ENCODE measurements at regions of chr5 and their contacts with region 1.

Region 1: DNA sequence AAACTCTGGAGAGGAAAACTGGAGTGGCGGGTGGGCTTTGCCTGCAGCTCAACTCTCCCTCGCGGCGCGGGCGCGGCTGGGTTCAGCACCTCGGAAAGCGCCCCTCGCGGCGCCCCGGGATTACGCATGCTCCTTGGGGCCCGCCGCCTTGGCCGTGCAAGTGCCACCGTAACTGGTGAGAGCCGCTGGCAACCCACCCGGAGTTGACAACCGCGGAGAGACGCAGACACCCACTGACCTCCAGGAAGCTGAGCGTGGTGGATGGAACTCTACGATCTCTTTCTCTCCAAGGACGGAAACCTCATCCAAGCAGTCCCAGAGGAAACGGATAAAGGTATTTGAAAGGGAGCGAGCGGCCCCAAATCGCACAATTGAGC is 194 bp upstream of the RXFP3 start:
- DNase-seq: no peak
- H3K4me3 ChIP-seq: peak overlapping the region; percentile 59
- CTCF ChIP-seq: no peak

Region 2: DNA sequence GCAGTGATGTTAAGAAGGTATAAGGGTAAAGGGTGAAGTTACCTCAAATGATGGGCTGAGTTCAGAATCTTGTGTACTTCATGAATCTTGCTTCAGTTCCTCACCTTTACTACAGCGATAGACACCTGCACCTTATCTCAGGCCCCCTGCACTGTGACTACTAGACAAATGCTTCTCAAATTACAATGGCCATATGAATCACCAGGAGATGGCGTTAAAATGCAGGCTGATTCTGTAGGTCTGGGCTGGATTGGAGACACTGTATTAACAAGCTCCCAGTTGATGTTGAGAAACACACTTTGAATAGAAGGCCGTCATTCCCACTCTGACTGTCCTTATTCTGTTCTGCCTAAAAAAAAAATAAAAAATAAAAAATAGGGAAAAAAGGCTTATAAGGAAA is 465.4 kb before region 1 on chr5:
- CTCF ChIA-PET with region 1: interaction called, 39 read pairs
- POLR2A ChIA-PET with region 1: no interaction called
- DNase-seq: peak; percentile 16
- H3K4me3 ChIP-seq: no peak overlapping the region
- CTCF ChIP-seq: peak; percentile 62

Region 3: GRCh38 chr5:33588654-33589372 is 347.2 kb before region 1 on chr5:
- CTCF ChIA-PET with region 1: interaction called, 21 read pairs
- POLR2A ChIA-PET with region 1: no interaction called
- DNase-seq: no peak
- H3K4me3 ChIP-seq: no peak overlapping the region
- CTCF ChIP-seq: peak; percentile 36

Region 4: GRCh38 chr5:33745101-33745770 is 190.8 kb before region 1 on chr5:
- CTCF ChIA-PET with region 1: interaction called, 12 read pairs
- POLR2A ChIA-PET with region 1: no interaction called
- DNase-seq: no peak
- H3K4me3 ChIP-seq: no peak overlapping the region
- CTCF ChIP-seq: no peak

Region 5: GRCh38 chr5:33925278-33925677 is 10.7 kb before region 1 on chr5:
- CTCF ChIA-PET with region 1: interaction called, 16 read pairs
- POLR2A ChIA-PET with region 1: no interaction called
- DNase-seq: no peak
- H3K4me3 ChIP-seq: no peak overlapping the region
- CTCF ChIP-seq: no peak

Region 6: GRCh38 chr5:33964132-33964700 is 28.2 kb after region 1 on chr5:
- CTCF ChIA-PET with region 1: interaction called, 21 read pairs
- POLR2A ChIA-PET with region 1: no interaction called
- DNase-seq: no peak
- H3K4me3 ChIP-seq: no peak overlapping the region
- CTCF ChIP-seq: no peak